A549 (cell line): ENCODE measurements at regions of chr17 and their contacts with region 1.

Region 1: GRCh38 chr17:51461578-51462004 is 201.2 kb downstream of the UTP18 start:
- DNase-seq: peak; percentile 81
- ATAC-seq: peak; percentile 88 to 98
- H3K4me3 ChIP-seq: peak overlapping the region; percentile 24; the same call in 2 of the 3 replicates
- H3K27ac ChIP-seq: peak overlapping the region in 1 of 2 experiments; percentile 26; a peak in 1 of 6 replicates
- H3K4me1 ChIP-seq: peaks cover 14% of the 10 kb centered on the region
- CTCF ChIP-seq: peak; percentile 85
- EP300 ChIP-seq: no peak
- POLR2A ChIP-seq: no peak
- RAD21 ChIP-seq: peak; percentile 62 to 73

Region 2: DNA sequence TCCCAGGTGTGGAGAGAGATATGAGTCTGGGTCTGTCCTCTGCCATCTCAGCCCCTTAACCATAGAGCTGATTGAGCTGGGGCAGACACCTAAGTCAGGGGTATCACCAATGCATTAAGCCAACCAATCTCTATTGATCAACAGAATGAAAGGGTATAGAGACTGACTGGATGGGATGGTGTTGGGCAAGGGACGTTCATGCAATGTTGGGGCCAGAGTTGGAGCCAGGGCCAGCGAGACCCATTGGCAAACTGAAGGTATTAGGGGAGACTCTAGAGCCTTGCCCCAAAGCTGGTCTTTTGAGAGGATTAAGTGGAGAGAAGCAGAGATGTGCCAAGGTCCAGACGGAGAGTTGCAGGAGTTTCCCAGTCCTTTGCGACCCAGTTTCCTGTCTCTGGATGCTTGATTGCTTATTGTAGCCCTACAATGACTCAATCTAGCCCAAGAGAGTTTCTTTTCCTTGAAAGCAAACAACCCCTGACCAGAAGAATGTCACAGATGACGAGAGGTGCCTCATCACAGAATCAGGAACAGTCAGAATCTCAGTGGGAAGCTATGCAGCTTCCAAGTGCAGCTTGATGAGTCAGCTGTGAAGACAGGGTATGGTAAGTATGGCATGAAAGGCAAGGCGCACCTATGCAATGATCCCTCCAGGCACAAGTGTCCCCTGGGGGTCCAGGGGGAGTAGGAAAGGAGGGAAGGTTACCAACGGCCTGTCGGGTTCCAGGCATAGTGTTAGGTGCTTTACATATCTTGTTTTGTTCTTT is 64.0 kb before region 1 on chr17:
- CTCF ChIA-PET with region 1: interaction called, 19 read pairs
- POLR2A ChIA-PET with region 1: interaction called, 3 read pairs
- DNase-seq: peak; percentile 91 to 94
- ATAC-seq: peak; percentile 96
- H3K4me3 ChIP-seq: no peak overlapping the region
- H3K27ac ChIP-seq: peak overlapping the region; percentile 72 to 87
- H3K4me1 ChIP-seq: peaks cover 39% of the 10 kb centered on the region
- CTCF ChIP-seq: no peak
- EP300 ChIP-seq: peak; percentile 81 to 89; a peak in 4 of 5 replicates
- POLR2A ChIP-seq: no peak
- RAD21 ChIP-seq: peak in 1 of 2 experiments; percentile 14; a peak in 3 of 5 replicates

Region 3: GRCh38 chr17:51435641-51436091 is 25.9 kb before region 1 on chr17:
- CTCF ChIA-PET with region 1: interaction called, 32 read pairs
- POLR2A ChIA-PET with region 1: no interaction called
- DNase-seq: peak; percentile 90 to 91
- ATAC-seq: peak; percentile 96 to 99
- H3K4me3 ChIP-seq: no peak overlapping the region
- H3K27ac ChIP-seq: peak overlapping the region in 1 of 2 experiments; percentile 47; a peak in 3 of 6 replicates
- H3K4me1 ChIP-seq: peaks cover 23% of the 10 kb centered on the region
- CTCF ChIP-seq: peak; percentile 66
- EP300 ChIP-seq: no peak
- POLR2A ChIP-seq: no peak
- RAD21 ChIP-seq: peak; percentile 52 to 63

Region 4: GRCh38 chr17:51472670-51473205 is 11.1 kb after region 1 on chr17:
- CTCF ChIA-PET with region 1: interaction called, 61 read pairs
- POLR2A ChIA-PET with region 1: no interaction called
- DNase-seq: no peak
- ATAC-seq: 0 out of 6 replicates have a peak, but pooled peaks of 1 of the 2 experiments have one; percentile 38
- H3K4me3 ChIP-seq: no peak overlapping the region
- H3K27ac ChIP-seq: no peak overlapping the region
- H3K4me1 ChIP-seq: no peaks in the 10 kb centered on the region
- CTCF ChIP-seq: no peak
- EP300 ChIP-seq: no peak
- POLR2A ChIP-seq: no peak
- RAD21 ChIP-seq: no peak

Region 5: GRCh38 chr17:51508048-51508447 is 46.5 kb after region 1 on chr17:
- CTCF ChIA-PET with region 1: interaction called, 13 read pairs
- POLR2A ChIA-PET with region 1: no interaction called
- DNase-seq: no peak
- ATAC-seq: no peak
- H3K4me3 ChIP-seq: no peak overlapping the region
- H3K27ac ChIP-seq: no peak overlapping the region
- H3K4me1 ChIP-seq: no peaks in the 10 kb centered on the region
- CTCF ChIP-seq: no peak
- EP300 ChIP-seq: no peak
- POLR2A ChIP-seq: no peak
- RAD21 ChIP-seq: peak in 1 of 2 experiments; percentile 10; a peak in 1 of 5 replicates

Region 6: DNA sequence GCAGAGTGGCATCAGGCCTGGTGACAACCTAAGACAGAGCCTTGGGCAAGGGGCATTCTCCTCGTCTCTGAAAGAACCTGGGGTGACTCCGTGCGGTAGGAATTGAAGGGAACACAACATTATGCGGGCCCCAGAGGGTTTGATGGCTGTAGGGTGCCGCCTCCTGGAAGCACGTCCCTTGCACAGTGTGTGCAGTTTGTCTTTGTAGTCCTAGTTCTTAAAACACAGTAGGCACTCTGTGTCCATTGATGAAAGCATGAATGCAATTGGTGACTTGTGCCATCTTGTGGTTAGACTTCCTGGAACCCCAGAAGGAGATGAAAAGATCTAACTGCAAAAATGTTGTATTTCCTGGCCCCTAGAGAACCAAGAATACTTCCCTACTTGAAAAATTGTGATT is 78.6 kb after region 1 on chr17:
- CTCF ChIA-PET with region 1: interaction called, 26 read pairs
- POLR2A ChIA-PET with region 1: no interaction called
- DNase-seq: peak in 1 of 2 experiments; percentile 20
- ATAC-seq: peak in 1 of 2 experiments; percentile 19; a peak in 2 of 6 replicates
- H3K4me3 ChIP-seq: no peak overlapping the region
- H3K27ac ChIP-seq: no peak overlapping the region
- H3K4me1 ChIP-seq: peaks cover 4% of the 10 kb centered on the region; the same call in 2 of the 3 replicates
- CTCF ChIP-seq: no peak
- EP300 ChIP-seq: no peak
- POLR2A ChIP-seq: no peak
- RAD21 ChIP-seq: peak in 1 of 2 experiments; percentile 62; a peak in 2 of 5 replicates